Dorsolateral prefrontal cortex (tissue), 120 donors: ENCODE measurements at regions of chrX and their contacts with region 1.

Region 1: GRCh38 chrX:134925551-134925950 is 65.2 kb upstream of the SMIM10 start:
- DNase-seq: no peak
- H3K4me3 ChIP-seq: no peak overlapping the region
- H3K27ac ChIP-seq: no peak overlapping the region
- H3K27me3 ChIP-seq: peaks cover 0 to 61% (median 6%) of the 10 kb centered on the region in 45 donors
- CTCF ChIP-seq: no peak

Region 2: GRCh38 chrX:134948333-134949241 is 23.0 kb after region 1 on chrX:
- intact Hi-C with region 1: loop called in 1 of 2 experiments (anchors 2 kb)
- DNase-seq: no peak
- H3K4me3 ChIP-seq: no peak overlapping the region
- H3K27ac ChIP-seq: no peak overlapping the region
- H3K27me3 ChIP-seq: peaks cover 0 to 22% (median 0%) of the 10 kb centered on the region in 45 donors
- CTCF ChIP-seq: no peak

Region 3: DNA sequence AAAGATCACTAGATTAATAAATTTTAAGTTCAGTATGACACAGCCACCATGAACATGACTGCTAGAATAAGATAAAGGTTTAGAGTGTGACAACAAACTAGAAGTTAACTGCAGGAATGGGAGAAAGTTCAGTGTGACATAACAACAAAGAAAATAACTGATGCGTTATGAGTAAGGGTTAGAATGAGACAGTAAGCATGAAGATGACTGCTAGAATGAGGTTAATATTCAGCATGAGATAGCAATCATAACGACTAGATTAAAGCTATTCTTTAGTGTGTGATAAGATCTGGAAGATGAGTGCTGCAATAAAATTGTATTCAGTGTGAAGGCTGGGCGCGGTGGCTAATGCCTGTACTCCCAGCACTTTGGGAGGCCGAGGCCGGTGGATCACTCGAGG is 447.8 kb after region 1 on chrX:
- intact Hi-C with region 1: no loop called
- DNase-seq: no peak
- H3K4me3 ChIP-seq: no peak overlapping the region
- H3K27ac ChIP-seq: no peak overlapping the region
- H3K27me3 ChIP-seq: peaks cover 0 to 40% (median 0%) of the 10 kb centered on the region in 45 donors
- CTCF ChIP-seq: no peak